Right ventricle myocardium superior (tissue), 1 donor: ENCODE measurements at regions of chr15 and their contacts with region 1.

Region 1: DNA sequence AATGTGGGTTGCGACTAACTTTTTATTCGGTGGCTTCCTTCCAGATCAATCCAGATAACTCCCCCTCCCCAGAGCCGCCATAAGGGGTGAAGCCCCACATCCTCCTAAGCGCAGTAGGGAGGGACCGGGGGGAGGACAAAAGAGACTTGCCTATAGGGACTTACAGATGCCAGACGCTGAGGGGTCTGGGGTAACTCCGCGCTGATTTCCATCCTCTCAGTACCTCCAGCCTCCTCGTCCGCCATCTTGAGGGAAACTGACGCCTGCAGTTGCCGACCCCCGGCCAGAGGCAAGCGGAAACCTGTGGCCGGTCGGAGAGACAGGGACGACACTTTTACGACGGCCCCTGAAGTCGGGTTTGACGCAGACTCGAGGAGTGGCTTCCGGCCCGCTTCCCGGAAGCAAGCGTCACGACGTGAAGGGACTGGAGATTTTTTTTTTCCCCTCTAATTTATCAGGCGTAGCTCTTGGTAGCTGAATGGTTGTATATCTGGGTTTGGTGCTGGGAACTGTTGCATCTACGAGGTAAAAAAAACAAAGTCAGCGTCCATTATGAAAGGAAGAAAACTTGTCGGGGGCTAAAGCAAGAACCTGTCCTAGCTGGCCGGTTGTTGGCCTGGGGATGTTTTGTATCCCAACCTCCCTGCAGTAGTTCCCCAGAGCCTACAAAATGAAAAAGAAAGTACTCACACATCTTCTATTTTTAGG is at the start of gene UBR1:
- DNase-seq: peak; percentile 94
- ATAC-seq: peak; percentile 99
- total RNA-seq, gene UBR1: 19.5 TPM

Region 2: GRCh38 chr15:43133430-43134156 is 27.7 kb after region 1 on chr15 and contains the start of gene TMEM62:
- intact Hi-C with region 1: loop called (anchors 2 kb)
- DNase-seq: peak; percentile 91
- ATAC-seq: peak; percentile 96
- total RNA-seq, gene TMEM62: 9.4 TPM